CD8-positive, alpha-beta T cell (primary cell): ENCODE measurements at regions of chr10 and their contacts with region 1.

Region 1: GRCh38 chr10:45373576-45374349 is at the start of gene ALOX5:
- DNase-seq: peak in 3 of 9 experiments; percentile 33 to 44 (median 41)
- ATAC-seq: peak; percentile 58
- H3K4me3 ChIP-seq: peak within 1 kb of the TSS; percentile 39 to 56
- H3K4me3 Mint-ChIP-seq: peak within 1 kb of the TSS; percentile 81
- H3K27ac ChIP-seq: no peak within 1 kb of the TSS
- H3K27ac Mint-ChIP-seq: no peak within 1 kb of the TSS
- H3K4me1 ChIP-seq: peaks cover 18% of the 10 kb centered on the region
- H3K4me1 Mint-ChIP-seq: peaks cover 14% of the 10 kb centered on the region
- H3K27me3 ChIP-seq: peaks cover 0 to 14% of the 10 kb centered on the region in 2 experiments
- H3K27me3 Mint-ChIP-seq: peaks cover 50% of the 10 kb centered on the region
- CTCF ChIP-seq: no peak
- total RNA-seq, gene ALOX5: 3.9 to 5.4 TPM

Region 2: GRCh38 chr10:45433716-45434469 is 60.1 kb after region 1 on chr10:
- CTCF ChIA-PET with region 1: no interaction called
- POLR2A ChIA-PET with region 1: no interaction called
- intact Hi-C with region 1: loop called in 1 of 2 experiments (anchors 10 kb)
- DNase-seq: peak in 3 of 9 experiments; percentile 24 to 49 (median 46)
- ATAC-seq: peak; percentile 65
- H3K4me3 ChIP-seq: peak overlapping the region in 1 of 2 experiments; percentile 6
- H3K4me3 Mint-ChIP-seq: peak overlapping the region; percentile 4
- H3K27ac ChIP-seq: peak overlapping the region; percentile 5 to 46
- H3K27ac Mint-ChIP-seq: peak overlapping the region; percentile 60
- H3K4me1 ChIP-seq: peaks cover 23% of the 10 kb centered on the region
- H3K4me1 Mint-ChIP-seq: peaks cover 23% of the 10 kb centered on the region
- H3K27me3 ChIP-seq: no peaks in the 10 kb centered on the region
- H3K27me3 Mint-ChIP-seq: no peaks in the 10 kb centered on the region
- CTCF ChIP-seq: no peak